ENCODE measurements at regions of chr5 and their contacts with region 1.

Region 1: GRCh38 chr5:135191084-135191826 is 157.2 kb upstream of the PITX1 start:
- DNase-seq: peak; percentile 50 to 63
- ATAC-seq: peak; percentile 93 to 96
- H3K4me3 ChIP-seq: peak overlapping the region; percentile 40 to 66 (median 56)
- H3K27ac ChIP-seq: no peak overlapping the region
- H3K4me1 ChIP-seq: peaks cover 0 to 6% of the 10 kb centered on the region in 2 donors
- H3K27me3 ChIP-seq: no peaks in the 10 kb centered on the region
- CTCF ChIP-seq: peak; percentile 82 to 96 (median 91)
- POLR2A ChIP-seq: no peak

Region 2: GRCh38 chr5:135013947-135014570 is 177.2 kb before region 1 on chr5:
- in situ Hi-C with region 1: loop called in 1 of 4 experiments (anchors 25 kb)
- intact Hi-C with region 1: no loop called
- DNase-seq: no peak
- ATAC-seq: no peak
- H3K4me3 ChIP-seq: no peak overlapping the region
- H3K27ac ChIP-seq: no peak overlapping the region
- H3K4me1 ChIP-seq: no peaks in the 10 kb centered on the region
- H3K27me3 ChIP-seq: no peaks in the 10 kb centered on the region
- CTCF ChIP-seq: no peak
- POLR2A ChIP-seq: no peak

Region 3: DNA sequence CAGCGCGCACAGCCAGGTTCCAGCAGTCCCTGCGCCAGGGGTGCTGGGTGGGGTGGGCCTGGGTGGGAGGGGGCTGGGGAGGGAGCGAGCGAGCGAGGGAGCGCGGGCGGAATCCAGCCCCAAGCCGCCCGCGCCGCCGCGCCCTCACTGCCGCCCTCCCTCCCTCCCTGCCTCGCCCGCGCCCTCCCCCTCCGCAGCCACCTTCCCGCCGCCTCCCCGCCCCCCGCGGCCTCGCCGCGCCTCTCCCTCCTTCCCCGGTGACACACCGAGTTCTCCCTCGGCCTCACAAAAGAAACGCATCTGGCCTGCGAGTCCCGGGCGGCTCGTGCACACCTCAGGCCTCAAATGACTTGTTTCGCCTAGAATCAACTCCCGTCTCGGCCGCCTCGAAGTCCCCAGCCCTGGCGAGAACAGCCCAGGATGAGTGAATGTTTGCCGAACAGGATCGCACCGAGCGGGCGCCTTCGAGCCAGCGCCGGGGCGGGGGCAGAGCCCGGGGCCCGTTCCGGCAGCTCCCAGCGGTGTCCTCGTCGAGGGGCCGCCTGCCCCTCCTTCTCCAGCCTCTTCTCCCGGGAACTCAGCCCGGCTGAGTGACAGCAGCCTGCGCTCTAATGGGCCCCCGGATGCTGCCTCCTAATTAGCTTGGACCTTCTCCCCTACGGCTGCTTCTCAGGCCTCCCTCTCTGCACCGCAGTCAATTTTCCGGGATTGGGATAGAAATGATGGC is 156.9 kb before region 1 on chr5:
- in situ Hi-C with region 1: no loop called
- intact Hi-C with region 1: loop called (anchors 5 kb)
- DNase-seq: no peak
- ATAC-seq: peak; percentile 20 to 43
- H3K4me3 ChIP-seq: peak overlapping the region; percentile 41 to 53 (median 52)
- H3K27ac ChIP-seq: peak overlapping the region in 3 of 4 donors; percentile 56 to 78 (median 62)
- H3K4me1 ChIP-seq: peaks cover 25 to 26% of the 10 kb centered on the region in 2 donors
- H3K27me3 ChIP-seq: peaks cover 75 to 86% (median 84%) of the 10 kb centered on the region in 3 donors
- CTCF ChIP-seq: no peak
- POLR2A ChIP-seq: no peak

Region 4: GRCh38 chr5:135271533-135272310 is 80.5 kb after region 1 on chr5:
- in situ Hi-C with region 1: no loop called
- intact Hi-C with region 1: loop called (anchors 5 kb)
- DNase-seq: peak in 1 of 2 donors; percentile 32
- ATAC-seq: peak in 1 of 2 donors; percentile 6
- H3K4me3 ChIP-seq: no peak overlapping the region
- H3K27ac ChIP-seq: peak overlapping the region; percentile 37 to 78 (median 48)
- H3K4me1 ChIP-seq: peaks cover 27 to 31% of the 10 kb centered on the region in 2 donors
- H3K27me3 ChIP-seq: no peaks in the 10 kb centered on the region
- CTCF ChIP-seq: no peak
- POLR2A ChIP-seq: no peak

Region 5: GRCh38 chr5:135332519-135333150 is 141.4 kb after region 1 on chr5:
- in situ Hi-C with region 1: loop called in 2 of 4 experiments (anchors 10 kb)
- intact Hi-C with region 1: loop called (anchors 2 kb)
- DNase-seq: no peak
- ATAC-seq: peak in 1 of 2 donors; percentile 31
- H3K4me3 ChIP-seq: no peak overlapping the region
- H3K27ac ChIP-seq: no peak overlapping the region
- H3K4me1 ChIP-seq: peaks cover 0 to 13% of the 10 kb centered on the region in 2 donors
- H3K27me3 ChIP-seq: no peaks in the 10 kb centered on the region
- CTCF ChIP-seq: peak; percentile 25 to 55 (median 43)
- POLR2A ChIP-seq: no peak